MCF 10A (cell line): ENCODE measurements at regions of chr1 and their contacts with region 1.

Region 1: DNA sequence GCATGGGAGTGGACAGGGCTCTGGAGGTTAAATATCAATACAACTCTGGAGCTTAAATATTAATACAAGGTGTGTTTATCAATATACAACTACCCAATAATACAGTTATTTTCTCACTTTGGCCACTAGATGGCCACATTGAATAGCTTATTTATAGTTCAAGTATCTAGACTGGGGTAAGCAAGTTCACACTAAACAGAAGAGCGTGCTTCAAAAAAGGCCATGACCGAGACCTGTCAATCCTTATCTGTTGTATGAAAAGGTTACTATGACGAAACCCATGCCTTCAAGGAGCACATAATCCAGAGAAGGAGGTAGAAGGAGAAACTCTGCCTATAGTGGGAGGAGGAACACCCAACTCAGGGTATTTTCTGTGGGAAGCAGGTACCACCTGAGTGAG is 29.1 kb downstream of the CHML start:
- DNase-seq: peak; percentile 92
- H3K4me3 Mint-ChIP-seq: no peak overlapping the region
- H3K27ac Mint-ChIP-seq: no peak overlapping the region
- H3K4me1 Mint-ChIP-seq: peaks cover 42% of the 10 kb centered on the region
- H3K27me3 Mint-ChIP-seq: no peaks in the 10 kb centered on the region
- CTCF ChIP-seq: peak; percentile 78

Region 2: GRCh38 chr1:241519308-241520079 is 91.6 kb before region 1 on chr1 and contains the start of gene FH:
- CTCF ChIA-PET with region 1: interaction called, 84 read pairs
- POLR2A ChIA-PET with region 1: interaction called, 53 read pairs
- intact Hi-C with region 1: no loop called
- DNase-seq: peak; percentile 100
- H3K4me3 Mint-ChIP-seq: no peak within 1 kb of the TSS
- H3K27ac Mint-ChIP-seq: peak within 1 kb of the TSS; percentile 67
- H3K4me1 Mint-ChIP-seq: peaks cover 19% of the 10 kb centered on the region
- H3K27me3 Mint-ChIP-seq: peaks cover 13% of the 10 kb centered on the region
- CTCF ChIP-seq: no peak
- total RNA-seq, gene FH: 136 and 215 TPM in 2 replicates

Region 3: DNA sequence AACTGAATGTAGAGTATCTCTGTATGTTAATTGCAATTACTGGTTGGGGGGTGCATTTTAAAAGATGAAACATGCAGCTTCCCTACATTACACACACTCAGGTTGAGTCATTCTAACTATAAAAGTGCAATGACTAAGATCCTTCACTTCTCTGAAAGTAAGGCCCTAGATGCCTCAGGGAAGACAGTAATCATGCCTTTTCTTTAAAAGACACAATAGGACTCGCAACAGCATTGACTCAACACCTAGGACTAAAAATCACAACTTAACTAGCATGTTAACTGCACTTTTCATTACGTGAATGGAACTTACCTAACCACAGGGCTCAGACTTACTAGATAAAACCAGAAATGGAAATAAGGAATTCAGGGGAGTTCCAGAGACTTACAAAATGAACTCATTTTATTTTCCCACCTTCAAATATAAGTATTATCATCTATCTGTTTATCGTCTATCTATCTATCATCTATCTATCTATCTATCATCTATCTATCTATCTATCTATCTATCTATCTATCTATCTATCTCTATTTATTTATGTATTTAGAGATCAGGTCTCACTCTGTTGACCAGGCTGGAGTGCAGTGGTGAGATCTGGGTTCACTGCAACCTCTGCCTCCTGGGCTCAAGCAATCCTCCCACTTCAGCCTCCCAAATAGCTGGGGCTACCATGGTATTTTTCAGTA is 18.6 kb before region 1 on chr1:
- CTCF ChIA-PET with region 1: interaction called, 155 read pairs
- POLR2A ChIA-PET with region 1: interaction called, 126 read pairs
- intact Hi-C with region 1: loop called (anchors 2 kb)
- DNase-seq: peak; percentile 98
- H3K4me3 Mint-ChIP-seq: peak overlapping the region; percentile 7
- H3K27ac Mint-ChIP-seq: peak overlapping the region; percentile 76
- H3K4me1 Mint-ChIP-seq: peaks cover 39% of the 10 kb centered on the region
- H3K27me3 Mint-ChIP-seq: no peaks in the 10 kb centered on the region
- CTCF ChIP-seq: no peak

Region 4: GRCh38 chr1:241716915-241717656 is 106.0 kb after region 1 on chr1:
- CTCF ChIA-PET with region 1: interaction called, 11 read pairs
- POLR2A ChIA-PET with region 1: interaction called, 11 read pairs
- intact Hi-C with region 1: no loop called
- DNase-seq: no peak
- H3K4me3 Mint-ChIP-seq: no peak overlapping the region
- H3K27ac Mint-ChIP-seq: peak overlapping the region; percentile 93
- H3K4me1 Mint-ChIP-seq: peaks cover 48% of the 10 kb centered on the region
- H3K27me3 Mint-ChIP-seq: no peaks in the 10 kb centered on the region
- CTCF ChIP-seq: no peak

Region 5: DNA sequence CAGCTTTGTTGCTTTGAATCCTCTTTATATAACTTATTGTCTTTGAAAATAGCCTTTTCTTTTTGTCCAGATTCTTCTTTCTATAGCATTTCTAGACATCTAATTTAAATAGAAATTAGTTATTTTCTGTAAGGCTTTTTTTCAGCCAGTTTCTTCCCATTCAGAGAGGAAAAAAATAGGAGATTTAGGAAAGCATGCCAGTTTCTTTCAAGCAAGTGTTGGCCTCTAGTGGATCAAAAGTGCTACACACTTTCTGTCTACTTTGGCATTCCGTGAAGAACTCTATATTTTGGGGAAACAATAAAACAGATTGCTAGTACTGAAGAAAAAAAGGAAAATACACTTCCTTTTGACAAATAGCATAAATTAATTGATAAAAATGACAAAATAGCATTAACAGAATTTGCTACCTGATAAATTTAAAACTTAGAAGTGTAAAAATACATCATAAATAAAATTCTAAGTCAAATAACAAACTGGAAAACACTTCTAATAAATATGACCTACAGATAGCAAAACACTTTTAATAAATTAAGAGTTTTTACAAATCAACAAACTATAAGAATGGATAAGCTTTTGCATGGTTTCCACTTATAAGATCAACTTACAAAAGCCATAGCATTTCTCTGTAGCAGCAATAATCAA is 223.8 kb after region 1 on chr1:
- CTCF ChIA-PET with region 1: interaction called, 137 read pairs
- POLR2A ChIA-PET with region 1: interaction called, 23 read pairs
- intact Hi-C with region 1: loop called (anchors 1 kb)
- DNase-seq: peak; percentile 75
- H3K4me3 Mint-ChIP-seq: no peak overlapping the region
- H3K27ac Mint-ChIP-seq: peak overlapping the region; percentile 36
- H3K4me1 Mint-ChIP-seq: peaks cover 22% of the 10 kb centered on the region
- H3K27me3 Mint-ChIP-seq: no peaks in the 10 kb centered on the region
- CTCF ChIP-seq: peak; percentile 98

Region 6: DNA sequence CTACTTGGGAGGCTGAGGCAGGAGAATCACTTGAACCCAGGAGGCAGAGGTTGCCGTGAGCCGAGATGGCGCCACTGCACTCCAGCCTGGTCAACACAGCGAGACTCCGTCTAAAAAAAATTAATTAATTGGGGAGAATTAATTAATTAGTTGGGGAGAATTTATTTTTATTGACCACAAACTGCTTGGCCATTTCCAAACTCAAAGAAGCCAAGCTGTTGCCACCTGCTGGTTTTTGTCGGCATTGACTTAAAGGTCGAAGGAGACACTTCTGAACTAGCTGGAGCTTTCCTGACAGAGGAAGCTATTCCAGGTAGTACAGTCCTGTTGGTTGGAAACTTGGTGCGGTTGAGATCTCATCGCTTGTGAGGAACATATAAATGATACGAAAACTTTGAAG is 374.7 kb after region 1 on chr1:
- CTCF ChIA-PET with region 1: interaction called, 11 read pairs
- POLR2A ChIA-PET with region 1: no interaction called
- intact Hi-C with region 1: no loop called
- DNase-seq: peak; percentile 80
- H3K4me3 Mint-ChIP-seq: no peak overlapping the region
- H3K27ac Mint-ChIP-seq: no peak overlapping the region
- H3K4me1 Mint-ChIP-seq: peaks cover 25% of the 10 kb centered on the region
- H3K27me3 Mint-ChIP-seq: no peaks in the 10 kb centered on the region
- CTCF ChIP-seq: peak; percentile 56